ENCODE measurements at regions of chr12 and their contacts with region 1.

Region 1: GRCh38 chr12:113152835-113153814 is 3.6 kb downstream of the CFAP73 start:
- DNase-seq: peak; percentile 88
- ATAC-seq: peak; percentile 93
- H3K4me3 ChIP-seq: peak overlapping the region; percentile 68
- H3K27ac ChIP-seq: no peak overlapping the region
- H3K4me1 ChIP-seq: peaks cover 7% of the 10 kb centered on the region; the same call in 1 of the 2 replicates
- H3K27me3 ChIP-seq: no peaks in the 10 kb centered on the region
- CTCF ChIP-seq: peak; percentile 76

Region 2: DNA sequence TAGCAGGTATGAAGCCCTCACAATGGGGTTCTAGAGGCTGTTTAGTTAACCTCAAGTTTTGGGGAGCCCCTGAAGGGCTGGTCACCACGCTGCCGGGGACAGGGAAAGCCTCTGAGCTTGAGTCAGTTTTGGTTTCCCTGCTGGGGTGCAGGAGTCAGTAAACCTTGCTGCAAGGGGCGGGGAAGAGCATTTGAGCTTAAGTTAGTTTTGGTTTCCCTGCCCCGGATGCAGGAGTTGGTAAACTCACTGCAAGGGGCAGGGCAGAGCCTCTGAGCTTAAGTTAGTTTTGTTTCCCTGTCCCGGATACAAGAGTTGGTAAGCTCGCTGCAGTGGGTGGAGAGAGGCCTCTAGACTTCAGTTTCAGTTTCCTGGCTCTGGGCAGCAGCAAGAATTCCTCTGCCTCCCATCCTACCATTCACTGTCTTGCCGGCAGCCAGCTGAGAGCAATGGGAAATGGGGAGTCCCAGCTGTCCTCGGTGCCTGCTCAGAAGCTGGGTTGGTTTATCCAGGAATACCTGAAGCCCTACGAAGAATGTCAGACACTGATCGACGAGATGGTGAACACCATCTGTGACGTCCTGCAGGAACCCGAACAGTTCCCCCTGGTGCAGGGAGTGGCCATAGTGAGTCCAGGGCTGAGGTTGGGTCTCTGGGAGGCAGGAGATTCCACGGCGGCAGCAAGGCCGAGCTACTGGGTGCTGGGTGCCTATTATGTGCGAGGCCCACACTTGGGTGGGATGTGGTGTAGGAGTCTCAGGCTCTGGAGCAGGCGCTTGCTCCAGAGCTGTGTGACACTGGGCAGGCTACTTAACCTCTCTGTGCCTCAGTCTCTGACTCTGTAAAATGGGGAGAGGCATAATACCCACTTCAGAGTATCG is 174.7 kb before region 1 on chr12 and contains the start of gene OAS2:
- CTCF ChIA-PET with region 1: no interaction called
- POLR2A ChIA-PET with region 1: no interaction called
- intact Hi-C with region 1: no loop called
- DNase-seq: peak; percentile 78
- ATAC-seq: peak; percentile 95
- H3K4me3 ChIP-seq: peak within 1 kb of the TSS; percentile 64
- H3K27ac ChIP-seq: peak within 1 kb of the TSS; percentile 11; the same call in 1 of the 2 replicates
- H3K4me1 ChIP-seq: peaks cover 14% of the 10 kb centered on the region
- H3K27me3 ChIP-seq: no peaks in the 10 kb centered on the region
- CTCF ChIP-seq: no peak
- total RNA-seq, gene OAS2: 5.8 and 10.5 TPM in 2 replicates

Region 3: GRCh38 chr12:113098446-113098896 is 54.7 kb before region 1 on chr12:
- CTCF ChIA-PET with region 1: no interaction called
- POLR2A ChIA-PET with region 1: no interaction called
- intact Hi-C with region 1: loop called (anchors 10 kb)
- DNase-seq: peak; percentile 99
- ATAC-seq: peak; percentile 95
- H3K4me3 ChIP-seq: no peak overlapping the region
- H3K27ac ChIP-seq: 0 out of 2 replicates have a peak overlapping the region, but pooled peaks have one; percentile 10
- H3K4me1 ChIP-seq: 0 out of 2 replicates have a peak, but pooled peaks cover 4% of the 10 kb centered on the region
- H3K27me3 ChIP-seq: no peaks in the 10 kb centered on the region
- CTCF ChIP-seq: peak; percentile 95

Region 4: DNA sequence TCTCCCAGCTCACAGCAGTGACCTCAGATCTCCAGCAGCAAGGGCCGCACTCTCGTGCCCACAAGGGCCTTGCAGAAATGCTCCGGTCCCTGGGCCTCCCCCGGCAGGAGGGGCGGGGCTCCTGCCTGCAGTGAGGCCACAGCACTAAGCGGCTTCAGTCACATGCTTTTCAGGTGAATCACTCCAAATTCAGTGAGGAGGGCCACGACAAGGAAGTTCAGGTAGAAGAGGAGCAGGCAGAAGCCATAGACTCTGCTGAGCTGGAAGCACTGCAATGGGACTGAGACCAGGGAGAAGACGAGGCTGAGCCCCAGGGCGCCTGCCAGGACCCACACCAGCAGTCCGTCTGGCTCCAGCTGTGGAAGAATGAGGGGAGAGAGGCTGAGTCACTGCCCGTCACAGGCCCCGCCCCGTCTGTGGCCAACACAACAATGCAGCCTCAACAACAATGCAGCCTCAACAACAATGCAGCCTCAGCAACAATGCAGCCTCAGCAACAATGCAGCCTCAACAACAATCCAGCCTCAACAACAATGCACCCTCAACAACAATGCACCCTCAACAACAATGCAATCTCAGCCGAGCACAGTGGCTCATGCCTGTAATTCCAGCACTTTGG is 146.6 kb after region 1 on chr12:
- CTCF ChIA-PET with region 1: no interaction called
- POLR2A ChIA-PET with region 1: no interaction called
- intact Hi-C with region 1: no loop called
- DNase-seq: peak; percentile 94
- ATAC-seq: peak; percentile 91
- H3K4me3 ChIP-seq: peak overlapping the region; percentile 10; the same call in 1 of the 2 replicates
- H3K27ac ChIP-seq: peak overlapping the region; percentile 83
- H3K4me1 ChIP-seq: peaks cover 17% of the 10 kb centered on the region
- H3K27me3 ChIP-seq: no peaks in the 10 kb centered on the region
- CTCF ChIP-seq: no peak

Measured in PC-3 (cell line).